ENCODE measurements at regions of chr10 and their contacts with region 1.

Region 1: GRCh38 chr10:100346765-100347567 is at the start of gene SCD:
- DNase-seq: peak; percentile 94
- ATAC-seq: peak; percentile 93
- H3K4me3 Mint-ChIP-seq: peak within 1 kb of the TSS; percentile 98
- H3K27ac Mint-ChIP-seq: peak within 1 kb of the TSS; percentile 83
- H3K4me1 Mint-ChIP-seq: peaks cover 55% of the 10 kb centered on the region
- H3K27me3 Mint-ChIP-seq: no peaks in the 10 kb centered on the region
- total RNA-seq, gene SCD: 121 to 134 TPM

Region 2: GRCh38 chr10:100138921-100139496 is 208.0 kb before region 1 on chr10:
- CTCF ChIA-PET with region 1: no interaction called
- DNase-seq: no peak
- ATAC-seq: no peak
- H3K4me3 Mint-ChIP-seq: no peak overlapping the region
- H3K27ac Mint-ChIP-seq: no peak overlapping the region
- H3K4me1 Mint-ChIP-seq: no peaks in the 10 kb centered on the region
- H3K27me3 Mint-ChIP-seq: peaks cover 45% of the 10 kb centered on the region

Region 3: GRCh38 chr10:100373298-100374136 is 26.6 kb after region 1 on chr10:
- CTCF ChIA-PET with region 1: interaction called, 12 read pairs
- DNase-seq: peak; percentile 98
- ATAC-seq: peak; percentile 87
- H3K4me3 Mint-ChIP-seq: no peak overlapping the region
- H3K27ac Mint-ChIP-seq: no peak overlapping the region
- H3K4me1 Mint-ChIP-seq: peaks cover 45% of the 10 kb centered on the region
- H3K27me3 Mint-ChIP-seq: no peaks in the 10 kb centered on the region